Activated CD8-positive, alpha-beta memory T cell treated with anti-CD3 and anti-CD28 coated beads, Interleukin-2, amount 10 ng/mL, durations not matched to agents 7 days and 5 days (primary cell): ENCODE measurements at regions of chr4 and their contacts with region 1.

Region 1: GRCh38 chr4:139030614-139031235 is 15.1 kb downstream of the NOCT start:
- DNase-seq: peak; percentile 84
- ATAC-seq: peak; percentile 80
- H3K4me3 Mint-ChIP-seq: no peak overlapping the region
- H3K27ac Mint-ChIP-seq: no peak overlapping the region
- H3K4me1 Mint-ChIP-seq: peaks cover 13% of the 10 kb centered on the region
- H3K27me3 Mint-ChIP-seq: no peaks in the 10 kb centered on the region

Region 2: DNA sequence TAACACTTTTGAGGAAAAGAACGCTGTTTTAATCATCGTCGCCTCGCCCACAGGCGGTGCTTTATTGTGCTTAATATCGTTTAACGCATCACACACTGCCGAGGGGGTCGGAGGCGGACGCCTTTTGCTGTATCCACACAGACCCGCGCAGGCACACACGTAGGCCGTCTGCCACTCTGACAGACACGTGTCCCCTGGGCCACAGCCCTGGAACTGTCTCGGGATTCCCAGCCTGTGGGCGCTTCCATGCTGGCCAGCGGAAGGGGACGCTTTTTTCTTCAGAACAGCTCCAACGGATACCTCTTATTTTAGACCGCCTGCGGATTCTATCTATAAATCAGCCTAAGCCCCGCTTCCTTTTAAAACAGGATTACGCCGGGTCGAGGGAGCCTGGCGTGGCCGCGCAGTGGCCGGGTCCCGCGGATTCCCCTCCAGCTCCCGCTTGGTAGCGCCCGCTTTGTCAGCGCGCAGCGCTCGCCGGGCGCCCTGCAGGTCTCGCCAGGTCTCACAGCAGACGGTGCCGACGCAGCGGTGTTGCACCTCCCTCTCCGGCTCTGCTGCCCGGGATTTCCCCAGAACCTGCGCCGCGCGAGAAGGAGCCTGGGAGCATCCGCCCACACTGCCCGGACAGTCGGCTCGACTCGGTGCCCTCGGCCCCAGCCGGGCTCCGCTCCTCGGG is 15.3 kb before region 1 on chr4 and contains the start of gene NOCT:
- CTCF ChIA-PET with region 1: interaction called, 38 read pairs
- DNase-seq: peak; percentile 94
- ATAC-seq: peak; percentile 96
- H3K4me3 Mint-ChIP-seq: peak within 1 kb of the TSS; percentile 84
- H3K27ac Mint-ChIP-seq: peak within 1 kb of the TSS; percentile 94
- H3K4me1 Mint-ChIP-seq: peaks cover 40% of the 10 kb centered on the region
- H3K27me3 Mint-ChIP-seq: no peaks in the 10 kb centered on the region
- total RNA-seq, gene NOCT: 8.8 to 12.4 TPM

Region 3: DNA sequence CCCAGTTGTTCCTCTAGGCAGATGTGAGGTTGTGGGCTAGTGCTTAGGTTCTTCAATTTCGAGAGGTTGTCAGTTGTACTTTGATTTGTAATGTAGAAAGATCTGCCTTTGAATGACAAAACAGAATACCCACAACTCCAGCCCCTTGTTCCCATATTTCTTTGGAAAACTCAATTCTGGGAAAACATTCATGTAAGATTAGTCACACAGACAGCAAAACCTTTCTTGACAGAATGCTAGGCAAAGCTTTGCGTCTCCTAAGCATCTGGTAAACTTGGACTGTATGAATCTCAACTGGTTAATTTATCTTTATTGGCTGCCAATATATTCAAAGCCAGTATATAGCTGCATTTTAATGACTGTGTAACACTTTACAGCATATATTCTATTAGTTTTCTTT is 19.7 kb after region 1 on chr4:
- CTCF ChIA-PET with region 1: interaction called, 14 read pairs
- DNase-seq: no peak
- ATAC-seq: no peak
- H3K4me3 Mint-ChIP-seq: no peak overlapping the region
- H3K27ac Mint-ChIP-seq: no peak overlapping the region
- H3K4me1 Mint-ChIP-seq: no peaks in the 10 kb centered on the region
- H3K27me3 Mint-ChIP-seq: no peaks in the 10 kb centered on the region

Region 4: GRCh38 chr4:139099366-139099982 is 68.7 kb after region 1 on chr4:
- CTCF ChIA-PET with region 1: interaction called, 29 read pairs
- DNase-seq: peak; percentile 81
- ATAC-seq: peak; percentile 81
- H3K4me3 Mint-ChIP-seq: no peak overlapping the region
- H3K27ac Mint-ChIP-seq: no peak overlapping the region
- H3K4me1 Mint-ChIP-seq: peaks cover 4% of the 10 kb centered on the region
- H3K27me3 Mint-ChIP-seq: no peaks in the 10 kb centered on the region

Region 5: DNA sequence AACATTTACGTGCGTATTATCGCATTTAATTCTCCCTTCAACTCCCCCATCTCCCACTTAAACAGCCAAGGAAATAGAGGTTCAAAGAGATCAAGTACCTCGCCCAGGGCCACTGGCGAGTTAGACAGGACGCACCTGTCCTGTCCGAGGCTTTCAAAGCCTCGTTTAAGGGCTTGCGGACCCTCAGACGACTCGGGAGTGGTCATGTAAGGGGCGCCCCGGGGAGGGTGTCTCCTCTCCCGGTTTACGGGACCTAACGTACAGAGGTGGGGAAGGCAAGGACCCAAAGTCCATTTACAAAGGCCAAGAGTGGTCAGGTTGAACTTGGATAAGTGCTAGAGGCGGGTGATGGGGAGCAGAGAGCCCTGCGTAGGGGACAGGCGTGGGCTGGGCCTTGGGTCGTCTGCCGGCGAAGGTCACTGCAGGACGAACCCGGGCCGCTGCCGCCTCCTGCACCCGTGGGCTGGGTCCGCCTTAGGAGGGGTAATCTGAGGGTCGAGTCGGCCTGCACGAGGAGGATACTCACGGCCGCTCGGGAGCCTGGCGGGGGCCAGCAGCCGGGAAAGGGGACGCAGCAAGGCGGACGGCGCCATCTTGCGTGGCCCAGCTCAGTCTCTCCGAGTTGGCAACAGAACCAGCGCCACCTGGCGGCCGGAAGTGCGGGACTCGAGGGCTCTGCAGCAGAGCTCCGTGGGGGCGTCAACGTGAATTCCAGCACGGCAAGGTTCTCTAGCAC is 264.6 kb after region 1 on chr4:
- CTCF ChIA-PET with region 1: interaction called, 30 read pairs
- DNase-seq: peak; percentile 98
- ATAC-seq: peak; percentile 97
- H3K4me3 Mint-ChIP-seq: peak overlapping the region; percentile 91
- H3K27ac Mint-ChIP-seq: peak overlapping the region; percentile 96
- H3K4me1 Mint-ChIP-seq: peaks cover 41% of the 10 kb centered on the region
- H3K27me3 Mint-ChIP-seq: no peaks in the 10 kb centered on the region